ENCODE measurements at regions of chr2 and their contacts with region 1.

Region 1: GRCh38 chr2:143852759-143853158 is 667.2 kb downstream of the ZEB2 start:
- DNase-seq: no peak
- H3K4me3 ChIP-seq: no peak overlapping the region
- H3K27ac ChIP-seq: no peak overlapping the region
- H3K4me1 ChIP-seq: no peaks in the 10 kb centered on the region
- H3K27me3 ChIP-seq: no peaks in the 10 kb centered on the region
- CTCF ChIP-seq: no peak
- EP300 ChIP-seq: no peak
- POLR2A ChIP-seq: no peak

Region 2: DNA sequence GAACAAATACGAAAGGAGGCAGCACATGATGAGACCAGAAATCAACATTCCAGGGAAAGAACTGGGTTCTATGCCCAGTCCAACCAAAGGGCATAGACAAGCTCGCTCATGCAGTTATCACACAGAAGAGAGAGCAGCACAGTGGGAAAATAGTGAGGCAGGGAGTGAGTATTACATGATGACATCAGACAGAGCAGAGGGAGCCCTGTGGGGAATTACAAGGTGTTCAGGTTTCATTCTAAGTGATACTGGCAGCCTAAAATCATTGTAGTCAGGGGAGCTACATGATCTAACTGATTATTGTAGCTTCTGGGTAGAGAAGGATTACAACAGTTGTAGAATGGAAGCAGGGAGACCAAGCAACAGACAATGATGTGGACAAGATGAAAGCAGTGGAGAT is 65.1 kb before region 1 on chr2:
- in situ Hi-C with region 1: no loop called
- intact Hi-C with region 1: loop called (anchors 2 kb)
- DNase-seq: no peak
- H3K4me3 ChIP-seq: no peak overlapping the region
- H3K27ac ChIP-seq: no peak overlapping the region
- H3K4me1 ChIP-seq: no peaks in the 10 kb centered on the region
- H3K27me3 ChIP-seq: no peaks in the 10 kb centered on the region
- CTCF ChIP-seq: no peak
- EP300 ChIP-seq: no peak
- POLR2A ChIP-seq: no peak

Region 3: GRCh38 chr2:143994961-143995360 is 142.2 kb after region 1 on chr2:
- in situ Hi-C with region 1: no loop called
- intact Hi-C with region 1: no loop called
- DNase-seq: no peak
- H3K4me3 ChIP-seq: no peak overlapping the region
- H3K27ac ChIP-seq: no peak overlapping the region
- H3K4me1 ChIP-seq: no peaks in the 10 kb centered on the region
- H3K27me3 ChIP-seq: no peaks in the 10 kb centered on the region
- CTCF ChIP-seq: no peak
- EP300 ChIP-seq: no peak
- POLR2A ChIP-seq: no peak

Measured in transverse colon (tissue), 4 donors.